ENCODE measurements at regions of chr4 and their contacts with region 1.

Region 1: GRCh38 chr4:1726146-1726934 is 5.0 kb downstream of the TACC3 start:
- DNase-seq: peak; percentile 82 to 96 (median 88)
- ATAC-seq: peak; percentile 32
- H3K4me3 ChIP-seq: no peak overlapping the region
- H3K4me3 Mint-ChIP-seq: peak overlapping the region; percentile 50
- H3K27ac ChIP-seq: no peak overlapping the region
- H3K27ac Mint-ChIP-seq: peak overlapping the region; percentile 80
- H3K4me1 ChIP-seq: peaks cover 58% of the 10 kb centered on the region
- H3K4me1 Mint-ChIP-seq: peaks cover 61% of the 10 kb centered on the region
- H3K27me3 ChIP-seq: no peaks in the 10 kb centered on the region
- H3K27me3 Mint-ChIP-seq: no peaks in the 10 kb centered on the region
- CTCF ChIP-seq: peak; percentile 93

Region 2: GRCh38 chr4:1740021-1740545 is 13.7 kb after region 1 on chr4:
- CTCF ChIA-PET with region 1: interaction called, 12 read pairs
- POLR2A ChIA-PET with region 1: no interaction called
- intact Hi-C with region 1: no loop called
- DNase-seq: no peak
- ATAC-seq: no peak
- H3K4me3 ChIP-seq: no peak overlapping the region
- H3K4me3 Mint-ChIP-seq: no peak overlapping the region
- H3K27ac ChIP-seq: no peak overlapping the region
- H3K27ac Mint-ChIP-seq: no peak overlapping the region
- H3K4me1 ChIP-seq: no peaks in the 10 kb centered on the region
- H3K4me1 Mint-ChIP-seq: no peaks in the 10 kb centered on the region
- H3K27me3 ChIP-seq: no peaks in the 10 kb centered on the region
- H3K27me3 Mint-ChIP-seq: no peaks in the 10 kb centered on the region
- CTCF ChIP-seq: no peak

Measured in CD8-positive, alpha-beta T cell (primary cell).